ENCODE measurements at regions of chr1 and their contacts with region 1.

Region 1: DNA sequence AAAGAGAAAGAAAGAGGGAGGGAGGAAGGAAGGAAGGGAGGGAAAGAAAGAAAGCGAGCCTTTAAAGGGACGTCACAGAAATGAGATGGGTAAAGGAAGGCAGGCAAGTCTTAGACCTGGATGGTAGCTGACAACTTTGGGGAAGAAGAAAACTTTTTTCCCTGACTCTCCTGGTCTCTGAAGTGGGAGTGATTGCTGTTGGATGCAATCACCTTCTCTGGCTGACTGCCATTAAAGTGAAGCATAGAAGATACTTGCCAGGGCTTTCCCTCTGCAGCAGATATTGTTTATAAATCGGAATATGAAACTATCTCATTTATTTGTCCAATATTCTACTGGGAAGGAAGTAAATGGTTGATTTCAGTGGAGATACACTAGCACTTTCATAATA is 27.0 kb downstream of the VCAM1 start:
- DNase-seq: no peak
- H3K4me3 ChIP-seq: no peak overlapping the region
- H3K27ac ChIP-seq: no peak overlapping the region
- H3K4me1 ChIP-seq: no peaks in the 10 kb centered on the region
- H3K27me3 ChIP-seq: no peaks in the 10 kb centered on the region
- CTCF ChIP-seq: no peak

Region 2: DNA sequence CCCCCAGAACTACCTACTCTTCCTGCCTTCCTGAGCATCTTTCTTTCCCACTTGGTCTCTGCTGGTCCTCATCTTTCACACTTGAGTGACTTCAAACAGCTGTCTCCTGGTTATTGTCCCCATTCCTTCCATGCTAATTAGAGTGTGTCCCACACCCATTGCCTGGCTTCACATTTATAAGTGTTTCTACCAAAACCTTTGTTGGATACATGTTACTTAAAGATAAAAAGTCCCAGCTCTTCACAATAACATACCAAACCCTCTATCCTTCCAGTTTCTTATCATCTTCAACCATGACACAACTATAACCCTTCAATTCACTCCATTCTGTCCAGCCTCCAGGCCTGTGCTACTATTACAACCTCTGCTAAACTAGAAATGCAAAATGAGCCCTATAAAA is 14.0 kb after region 1 on chr1:
- CTCF ChIA-PET with region 1: interaction called, 11 read pairs
- POLR2A ChIA-PET with region 1: no interaction called
- intact Hi-C with region 1: no loop called
- DNase-seq: no peak
- H3K4me3 ChIP-seq: no peak overlapping the region
- H3K27ac ChIP-seq: no peak overlapping the region
- H3K4me1 ChIP-seq: no peaks in the 10 kb centered on the region
- H3K27me3 ChIP-seq: no peaks in the 10 kb centered on the region
- CTCF ChIP-seq: no peak

Measured in A673 (cell line).